Activated B cell treated with CpG ODN at 0.5 μM for 24 hours (primary cell): ENCODE measurements at regions of chr14 and their contacts with region 1.

Region 1: GRCh38 chr14:103808403-103809001 is 38.9 kb downstream of the PPP1R13B start:
- DNase-seq: no peak
- ATAC-seq: peak; percentile 69
- H3K4me3 Mint-ChIP-seq: no peak overlapping the region
- H3K27ac Mint-ChIP-seq: no peak overlapping the region
- H3K4me1 Mint-ChIP-seq: peaks cover 21% of the 10 kb centered on the region
- H3K27me3 Mint-ChIP-seq: no peaks in the 10 kb centered on the region
- CTCF ChIP-seq: peak; percentile 55

Region 2: DNA sequence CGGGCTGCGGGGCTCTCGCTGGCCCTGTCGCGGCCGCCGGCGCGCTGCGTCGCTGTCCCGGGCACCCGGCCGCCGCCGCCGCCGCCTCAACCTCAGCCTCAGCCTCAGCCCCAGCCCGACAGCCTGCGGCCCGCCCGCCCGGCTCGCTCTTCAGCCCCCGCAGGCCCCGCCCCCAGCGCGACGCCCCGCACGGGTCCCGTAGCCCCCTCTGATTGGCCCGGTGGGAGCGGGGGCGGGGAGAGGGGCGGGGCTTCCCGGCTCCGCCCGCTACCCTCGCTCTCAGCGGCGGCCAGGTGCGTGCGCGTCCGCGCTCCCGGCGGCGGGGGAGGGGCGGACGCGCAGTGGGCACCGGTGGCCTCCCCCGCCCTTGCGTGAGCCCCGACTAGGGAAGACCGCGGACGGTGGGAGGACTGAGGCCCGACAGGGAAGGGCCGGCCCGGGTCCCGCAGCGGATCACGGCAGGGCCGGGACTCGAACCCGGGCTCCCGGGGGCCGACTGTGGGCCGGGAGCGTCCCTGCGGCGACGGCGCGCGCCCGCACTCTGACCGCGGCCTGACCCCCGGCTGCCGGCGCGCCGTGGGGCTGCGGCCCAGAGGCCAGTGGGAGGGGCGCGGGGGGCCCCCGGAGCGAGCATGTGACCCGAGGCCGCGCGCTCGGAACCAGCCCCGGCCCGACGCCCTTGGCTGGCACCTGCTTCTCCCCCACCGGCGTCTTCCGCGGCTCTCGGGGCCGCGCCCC is 39.1 kb after region 1 on chr14 and contains the start of gene PPP1R13B:
- CTCF ChIA-PET with region 1: interaction called, 3 read pairs
- POLR2A ChIA-PET with region 1: interaction called, 9 read pairs
- intact Hi-C with region 1: loop called (anchors 5 kb)
- DNase-seq: peak; percentile 96
- ATAC-seq: peak; percentile 97
- H3K4me3 Mint-ChIP-seq: peak within 1 kb of the TSS; percentile 87
- H3K27ac Mint-ChIP-seq: peak within 1 kb of the TSS; percentile 63
- H3K4me1 Mint-ChIP-seq: peaks cover 12% of the 10 kb centered on the region
- H3K27me3 Mint-ChIP-seq: no peaks in the 10 kb centered on the region
- CTCF ChIP-seq: no peak
- total RNA-seq, gene PPP1R13B: 16.2 and 18.8 TPM in 2 replicates

Region 3: GRCh38 chr14:103973354-103973753 is 164.9 kb after region 1 on chr14:
- CTCF ChIA-PET with region 1: interaction called, 36 read pairs
- POLR2A ChIA-PET with region 1: no interaction called
- intact Hi-C with region 1: no loop called
- DNase-seq: no peak
- ATAC-seq: no peak
- H3K4me3 Mint-ChIP-seq: no peak overlapping the region
- H3K27ac Mint-ChIP-seq: no peak overlapping the region
- H3K4me1 Mint-ChIP-seq: no peaks in the 10 kb centered on the region
- H3K27me3 Mint-ChIP-seq: peaks cover 3% of the 10 kb centered on the region
- CTCF ChIP-seq: no peak

Region 4: GRCh38 chr14:104078031-104078455 is 269.5 kb after region 1 on chr14:
- CTCF ChIA-PET with region 1: interaction called, 4 read pairs
- POLR2A ChIA-PET with region 1: no interaction called
- intact Hi-C with region 1: loop called (anchors 1 kb)
- DNase-seq: peak; percentile 75
- ATAC-seq: peak; percentile 99
- H3K4me3 Mint-ChIP-seq: no peak overlapping the region
- H3K27ac Mint-ChIP-seq: peak overlapping the region; percentile 55
- H3K4me1 Mint-ChIP-seq: peaks cover 9% of the 10 kb centered on the region
- H3K27me3 Mint-ChIP-seq: peaks cover 20% of the 10 kb centered on the region
- CTCF ChIP-seq: peak; percentile 84